K562 (cell line): ENCODE measurements at regions of chr6 and their contacts with region 1.

Region 1: DNA sequence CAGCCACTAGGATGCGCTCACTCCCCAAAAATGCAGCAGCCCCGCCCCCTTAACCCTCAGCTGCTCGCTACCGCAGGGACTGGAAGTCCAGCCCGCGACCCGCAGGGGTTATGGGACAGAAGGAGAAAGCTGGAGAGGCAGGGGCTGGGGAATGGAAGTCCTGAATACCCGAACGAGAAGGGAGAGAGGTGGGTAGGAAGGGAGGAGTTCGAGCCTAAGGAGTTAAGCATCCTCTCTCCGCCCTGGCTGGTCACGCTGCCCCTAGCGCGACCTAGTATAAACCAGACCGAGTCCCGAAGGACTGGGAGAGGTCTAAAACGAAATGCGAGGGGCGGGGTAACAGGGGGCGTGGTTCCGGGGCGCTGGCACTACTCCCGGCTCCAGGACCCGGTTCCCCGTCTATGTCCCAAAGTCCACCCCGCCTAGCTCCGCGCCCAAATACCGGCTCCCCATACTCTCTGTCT is 448 bp upstream of the DDAH2 start:
- DNase-seq: peak; percentile 91 to 97 (median 94)
- ATAC-seq: peak; percentile 84
- H3K4me3 ChIP-seq: peak overlapping the region; percentile 65
- H3K27ac ChIP-seq: peak overlapping the region; percentile 75
- H3K4me1 ChIP-seq: peaks cover 53 to 67% of the 10 kb centered on the region in 2 experiments
- H3K27me3 ChIP-seq: no peaks in the 10 kb centered on the region
- CTCF ChIP-seq: peak; percentile 12 to 99 (median 95); a peak in 5 of 6 replicates
- EP300 ChIP-seq: no peak; the same call in 1 of the 2 replicates
- POLR2A ChIP-seq: no peak; the same call in 1 of the 2 replicates
- RAD21 ChIP-seq: peak; percentile 99

Region 2: DNA sequence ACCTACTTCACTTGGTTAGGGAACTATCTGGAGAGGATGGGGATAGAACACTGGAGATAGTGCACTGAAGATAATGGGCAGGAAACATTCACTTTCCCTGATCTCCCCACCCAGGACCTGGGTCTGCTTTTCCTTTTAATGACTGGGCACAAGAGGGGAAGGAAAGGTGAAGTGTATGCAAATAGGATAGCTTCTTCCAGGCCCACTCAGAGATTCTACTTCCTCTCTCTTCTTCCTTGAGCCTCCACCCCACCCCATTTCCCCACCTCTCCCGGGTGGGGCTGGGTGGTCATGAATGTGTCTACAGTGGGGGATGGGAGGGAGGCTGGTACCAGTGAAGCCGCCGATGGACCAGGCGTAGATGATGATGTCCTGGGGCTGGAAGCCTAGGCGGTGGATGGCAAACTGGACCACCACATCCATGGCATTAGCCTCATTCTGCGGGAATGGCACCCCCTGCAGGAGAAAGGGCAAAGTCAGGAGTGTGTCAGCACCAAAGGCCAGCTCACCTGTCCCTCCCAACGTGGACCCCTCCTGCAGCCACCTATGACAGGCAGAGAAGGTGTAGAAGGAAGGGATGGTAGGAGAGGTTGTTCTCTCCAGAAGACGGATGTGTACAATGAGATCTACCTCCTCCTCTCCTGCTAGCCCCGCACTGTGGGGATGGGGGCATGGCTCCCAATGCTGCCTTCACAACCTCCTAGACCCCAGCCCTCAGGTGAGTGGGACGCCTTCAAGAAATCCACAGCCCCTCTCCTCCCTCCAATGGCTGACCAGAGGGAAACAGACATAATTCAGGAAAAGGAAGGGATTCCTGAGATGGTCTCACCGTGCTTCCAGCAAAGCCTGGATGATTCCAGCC is 40.1 kb before region 1 on chr6:
- CTCF ChIA-PET with region 1: no interaction called
- POLR2A ChIA-PET with region 1: interaction called, 76 read pairs
- in situ Hi-C with region 1: no loop called
- intact Hi-C with region 1: loop called (anchors 2 kb)
- DNase-seq: peak in 2 of 4 experiments; percentile 66 to 72
- ATAC-seq: peak; percentile 60
- H3K4me3 ChIP-seq: no peak overlapping the region; the same call in 1 of the 2 replicates
- H3K27ac ChIP-seq: peak overlapping the region; percentile 88
- H3K4me1 ChIP-seq: peaks cover 63 to 65% of the 10 kb centered on the region in 2 experiments
- H3K27me3 ChIP-seq: no peaks in the 10 kb centered on the region
- CTCF ChIP-seq: peak; percentile 63 to 96 (median 68)
- EP300 ChIP-seq: no peak
- POLR2A ChIP-seq: no peak
- RAD21 ChIP-seq: peak in 1 of 2 experiments; percentile 45; a peak in 2 of 4 replicates

Region 3: GRCh38 chr6:31712296-31712695 is 17.3 kb before region 1 on chr6:
- CTCF ChIA-PET with region 1: interaction called, 3 read pairs
- POLR2A ChIA-PET with region 1: interaction called, 223 read pairs
- in situ Hi-C with region 1: no loop called
- intact Hi-C with region 1: no loop called
- DNase-seq: no peak
- ATAC-seq: no peak
- H3K4me3 ChIP-seq: no peak overlapping the region
- H3K27ac ChIP-seq: no peak overlapping the region
- H3K4me1 ChIP-seq: peaks cover 25 to 42% of the 10 kb centered on the region in 2 experiments
- H3K27me3 ChIP-seq: no peaks in the 10 kb centered on the region
- CTCF ChIP-seq: no peak
- EP300 ChIP-seq: no peak
- POLR2A ChIP-seq: no peak
- RAD21 ChIP-seq: no peak

Region 4: GRCh38 chr6:31769684-31770371 is 40.3 kb after region 1 on chr6:
- CTCF ChIA-PET with region 1: interaction called, 18 read pairs
- POLR2A ChIA-PET with region 1: interaction called, 11 read pairs
- in situ Hi-C with region 1: no loop called
- intact Hi-C with region 1: loop called (anchors 1 kb)
- DNase-seq: peak; percentile 98 to 100 (median 100)
- ATAC-seq: peak; percentile 91
- H3K4me3 ChIP-seq: no peak overlapping the region
- H3K27ac ChIP-seq: peak overlapping the region; percentile 26; the same call in 2 of the 3 replicates
- H3K4me1 ChIP-seq: peaks cover 24 to 68% of the 10 kb centered on the region in 2 experiments
- H3K27me3 ChIP-seq: no peaks in the 10 kb centered on the region
- CTCF ChIP-seq: peak; percentile 98 to 100 (median 99)
- EP300 ChIP-seq: peak; percentile 28
- POLR2A ChIP-seq: no peak
- RAD21 ChIP-seq: peak; percentile 99 to 100

Region 5: DNA sequence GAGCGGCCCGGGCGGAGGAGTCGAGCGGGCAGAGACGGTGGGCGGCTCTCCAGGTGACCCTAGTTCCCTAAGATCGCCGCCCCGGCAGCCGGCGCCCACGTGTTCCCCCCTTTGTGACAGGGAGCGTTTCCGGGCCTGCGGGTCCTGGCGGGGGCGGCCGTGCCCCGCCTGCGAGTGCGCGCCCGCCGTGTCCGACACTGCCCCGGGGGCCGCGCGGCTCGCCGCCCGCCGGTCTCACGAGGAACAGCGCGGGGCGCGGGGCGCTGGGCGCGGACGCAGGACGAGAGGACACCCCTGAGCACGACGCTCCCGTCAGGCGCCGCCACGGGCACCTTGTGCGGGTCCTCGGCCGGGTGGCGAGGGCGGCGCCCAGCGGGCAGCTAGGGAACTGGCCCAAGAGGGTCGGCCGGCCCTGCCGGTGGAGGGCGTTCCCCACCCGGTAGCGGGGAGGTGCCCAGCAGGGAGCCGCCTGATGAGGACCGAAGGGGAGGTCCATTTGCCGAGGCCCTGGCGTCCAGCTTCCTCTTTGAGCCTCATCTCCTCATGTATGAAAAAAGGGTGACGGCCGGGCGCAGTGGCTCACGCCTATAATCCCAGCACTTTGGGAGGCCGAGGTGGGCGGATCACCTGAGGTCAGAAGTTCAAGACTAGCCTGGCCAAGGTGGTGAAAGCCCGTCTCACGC is 66.2 kb after region 1 on chr6 and contains the start of gene VARS1:
- CTCF ChIA-PET with region 1: no interaction called
- POLR2A ChIA-PET with region 1: interaction called, 5 read pairs
- in situ Hi-C with region 1: no loop called
- intact Hi-C with region 1: loop called (anchors 1 kb)
- DNase-seq: peak; percentile 99 to 100 (median 100)
- ATAC-seq: peak; percentile 92
- H3K4me3 ChIP-seq: peak within 1 kb of the TSS; percentile 61
- H3K27ac ChIP-seq: peak within 1 kb of the TSS; percentile 97
- H3K4me1 ChIP-seq: peaks cover 17 to 44% of the 10 kb centered on the region in 2 experiments
- H3K27me3 ChIP-seq: no peaks in the 10 kb centered on the region
- CTCF ChIP-seq: peak; percentile 99 to 100 (median 100)
- EP300 ChIP-seq: peak; percentile 59; the same call in 1 of the 2 replicates
- POLR2A ChIP-seq: peak; percentile 38; the same call in 1 of the 2 replicates
- RAD21 ChIP-seq: peak; percentile 99 to 100
- polyA plus RNA-seq, gene VARS1: 2.9 to 10.4 TPM